Posterior vena cava (tissue), 2 donors: ENCODE measurements at regions of chr15 and their contacts with region 1.

Region 1: DNA sequence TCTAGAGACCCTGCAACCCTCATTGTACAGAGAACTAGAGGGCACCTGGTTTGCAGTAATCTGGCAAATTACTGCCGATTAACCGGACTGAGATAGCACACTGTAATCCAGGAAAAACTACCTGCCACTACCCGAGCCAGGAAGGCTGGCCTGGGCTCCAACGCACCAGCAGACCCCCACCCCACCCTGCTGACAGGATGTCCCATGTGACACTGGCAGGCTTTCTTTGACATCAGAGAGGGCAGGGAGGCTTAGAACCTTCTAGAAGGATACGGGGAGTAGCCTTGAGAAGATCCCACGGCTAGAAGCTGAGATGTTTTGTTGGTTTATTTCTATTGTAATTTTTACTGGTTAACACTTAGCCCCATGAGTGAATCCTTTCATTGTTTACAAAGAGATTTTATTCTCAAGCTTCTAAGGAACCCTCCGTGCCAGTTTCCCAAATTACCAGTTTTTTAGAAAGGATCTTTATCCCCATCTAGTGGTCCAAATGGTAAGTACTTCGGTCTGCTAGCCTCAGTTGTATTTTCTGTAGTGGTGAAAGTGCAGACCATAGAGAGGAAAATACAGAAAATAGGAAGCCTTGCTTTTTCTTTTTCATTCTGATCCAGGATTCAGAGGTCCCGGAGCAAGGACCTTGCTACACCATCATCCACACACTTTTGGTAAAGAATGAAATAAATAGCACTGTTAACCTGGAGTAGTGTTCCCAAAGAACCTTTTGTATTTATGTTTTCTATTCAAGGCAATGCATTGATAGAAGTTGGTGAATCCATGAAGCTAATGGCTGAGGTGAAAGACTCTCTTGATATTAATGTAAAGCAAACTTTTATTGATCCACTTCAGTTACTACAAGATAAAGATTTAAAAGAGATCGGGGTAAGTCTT is 81.9 kb upstream of the ADAMTSL3 start:
- DNase-seq: no peak

Region 2: GRCh38 chr15:83538682-83539081 is 33.4 kb before region 1 on chr15:
- intact Hi-C with region 1: loop called in 1 of 2 experiments (anchors 1 kb)
- DNase-seq: no peak